Heart left ventricle (tissue), 16 donors: ENCODE measurements at regions of chr17 and their contacts with region 1.

Region 1: GRCh38 chr17:42843358-42843934 is 934 bp upstream of the AOC2 start:
- DNase-seq: peak in 2 of 5 donors; percentile 37 to 38
- ATAC-seq: peak; percentile 62 to 81 (median 72)
- H3K4me3 ChIP-seq: no peak overlapping the region
- H3K27ac ChIP-seq: peak overlapping the region in 1 of 12 donors; percentile 35
- H3K4me1 ChIP-seq: peaks cover 0 to 14% (median 1%) of the 10 kb centered on the region in 12 donors
- H3K27me3 ChIP-seq: no peaks in the 10 kb centered on the region
- CTCF ChIP-seq: peak; percentile 80 to 99 (median 92)
- POLR2A ChIP-seq: no peak

Region 2: GRCh38 chr17:42891539-42892152 is 48.2 kb after region 1 on chr17:
- intact Hi-C with region 1: loop called in 1 of 10 experiments (anchors 5 kb)
- DNase-seq: peak; percentile 67 to 81 (median 70)
- ATAC-seq: peak; percentile 94 to 97 (median 96)
- H3K4me3 ChIP-seq: no peak overlapping the region
- H3K27ac ChIP-seq: peak overlapping the region; percentile 72 to 95 (median 83)
- H3K4me1 ChIP-seq: peaks cover 5 to 60% (median 36%) of the 10 kb centered on the region in 12 donors
- H3K27me3 ChIP-seq: no peaks in the 10 kb centered on the region
- CTCF ChIP-seq: no peak
- POLR2A ChIP-seq: no peak

Region 3: DNA sequence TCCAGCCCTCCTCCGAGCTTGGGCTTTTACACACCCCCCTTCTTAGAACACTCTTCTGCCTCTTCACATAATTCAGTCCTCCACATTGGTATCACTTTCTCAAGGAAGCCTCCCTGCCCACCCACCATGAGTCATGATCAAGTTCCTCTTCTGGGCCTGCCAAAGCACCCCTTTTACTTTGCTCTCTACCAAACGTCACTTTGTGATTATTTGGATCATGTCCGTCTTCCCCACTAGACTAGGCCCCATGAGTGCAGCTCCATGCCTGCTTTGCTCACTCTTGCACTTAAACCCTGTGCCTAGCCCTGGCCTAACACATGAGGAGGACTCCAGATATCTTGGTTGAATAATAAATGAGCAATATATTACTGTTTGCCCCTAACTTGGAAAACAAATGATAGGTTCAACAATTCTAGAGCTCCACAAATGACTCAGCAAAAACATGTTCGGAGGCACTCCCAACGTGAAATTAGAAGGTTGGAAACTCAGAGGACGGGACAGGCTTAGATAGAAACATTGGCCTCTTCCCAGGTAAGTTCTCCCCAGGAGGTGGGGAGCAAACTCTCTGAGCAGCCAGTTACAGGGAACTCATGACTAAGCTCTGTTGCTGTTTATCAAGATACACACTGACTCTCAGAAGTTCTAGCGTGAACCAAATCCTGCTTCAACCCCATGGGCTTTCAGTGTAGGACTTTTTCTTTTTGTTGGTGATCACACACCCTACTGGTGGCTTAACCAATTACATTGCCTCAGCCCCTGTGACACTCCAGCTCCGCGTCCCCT is 85.5 kb after region 1 on chr17:
- intact Hi-C with region 1: loop called in 6 of 10 experiments (anchors 2 kb)
- DNase-seq: peak in 3 of 5 donors; percentile 26 to 54 (median 42)
- ATAC-seq: peak; percentile 75 to 94 (median 92)
- H3K4me3 ChIP-seq: peak overlapping the region in 1 of 12 donors; percentile 6
- H3K27ac ChIP-seq: peak overlapping the region in 9 of 12 donors; percentile 3 to 89 (median 57)
- H3K4me1 ChIP-seq: peaks cover 0 to 29% (median 9%) of the 10 kb centered on the region in 12 donors
- H3K27me3 ChIP-seq: no peaks in the 10 kb centered on the region
- CTCF ChIP-seq: peak; percentile 58 to 82 (median 64)
- POLR2A ChIP-seq: no peak

Region 4: DNA sequence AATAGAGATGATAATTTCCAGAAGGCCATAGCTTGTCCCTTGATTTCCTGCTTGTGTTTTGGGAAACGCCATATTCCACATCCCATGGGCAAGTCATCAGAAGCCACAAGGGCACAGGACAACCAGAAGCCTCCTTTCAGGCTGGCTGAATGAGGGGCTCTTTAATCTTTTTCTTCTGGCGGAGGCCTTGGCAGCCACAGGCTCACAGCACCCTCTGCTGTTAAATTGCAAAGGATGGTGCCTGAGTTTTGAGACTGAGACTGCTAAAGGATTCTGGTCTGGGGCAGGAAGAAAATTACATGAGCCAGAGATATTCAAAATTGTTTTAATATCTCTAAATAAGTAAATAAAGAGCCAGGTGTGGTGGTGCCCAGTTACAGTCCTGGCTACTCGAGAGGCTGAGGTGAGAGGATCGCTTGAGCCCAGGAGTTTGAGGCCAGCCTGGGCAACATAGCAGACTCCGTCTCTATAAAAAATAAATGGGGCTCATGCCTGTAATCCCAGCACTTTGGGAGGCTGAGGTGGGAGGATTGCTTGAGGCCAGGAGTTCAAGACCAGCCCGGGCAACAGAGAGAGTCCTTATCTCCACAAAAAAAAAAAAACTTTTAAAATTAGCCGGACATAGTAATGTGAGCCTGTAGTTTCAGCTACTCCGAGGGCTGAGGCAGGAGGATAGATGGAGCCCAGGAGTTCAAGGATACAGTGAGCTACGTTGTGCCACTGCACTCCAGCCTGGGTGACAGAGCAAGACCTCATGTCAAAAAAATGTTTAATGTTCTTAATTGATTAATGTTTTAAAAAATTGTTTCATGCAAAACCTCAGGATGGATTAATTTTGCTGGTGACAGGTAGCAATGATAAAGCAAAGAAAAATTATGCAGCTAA is 94.5 kb after region 1 on chr17:
- intact Hi-C with region 1: loop called in 9 of 10 experiments (anchors 1 to 5 kb)
- DNase-seq: peak in 4 of 5 donors; percentile 33 to 38 (median 36)
- ATAC-seq: peak; percentile 58 to 83 (median 74)
- H3K4me3 ChIP-seq: no peak overlapping the region
- H3K27ac ChIP-seq: no peak overlapping the region
- H3K4me1 ChIP-seq: no peaks in the 10 kb centered on the region
- H3K27me3 ChIP-seq: peaks cover 0 to 4% (median 0%) of the 10 kb centered on the region in 9 donors
- CTCF ChIP-seq: peak; percentile 52 to 80 (median 66)
- POLR2A ChIP-seq: no peak